ENCODE measurements at regions of chr15 and their contacts with region 1.

Region 1: GRCh38 chr15:39968273-39969001 is 34.5 kb downstream of the EIF2AK4 start:
- DNase-seq: no peak

Region 2: DNA sequence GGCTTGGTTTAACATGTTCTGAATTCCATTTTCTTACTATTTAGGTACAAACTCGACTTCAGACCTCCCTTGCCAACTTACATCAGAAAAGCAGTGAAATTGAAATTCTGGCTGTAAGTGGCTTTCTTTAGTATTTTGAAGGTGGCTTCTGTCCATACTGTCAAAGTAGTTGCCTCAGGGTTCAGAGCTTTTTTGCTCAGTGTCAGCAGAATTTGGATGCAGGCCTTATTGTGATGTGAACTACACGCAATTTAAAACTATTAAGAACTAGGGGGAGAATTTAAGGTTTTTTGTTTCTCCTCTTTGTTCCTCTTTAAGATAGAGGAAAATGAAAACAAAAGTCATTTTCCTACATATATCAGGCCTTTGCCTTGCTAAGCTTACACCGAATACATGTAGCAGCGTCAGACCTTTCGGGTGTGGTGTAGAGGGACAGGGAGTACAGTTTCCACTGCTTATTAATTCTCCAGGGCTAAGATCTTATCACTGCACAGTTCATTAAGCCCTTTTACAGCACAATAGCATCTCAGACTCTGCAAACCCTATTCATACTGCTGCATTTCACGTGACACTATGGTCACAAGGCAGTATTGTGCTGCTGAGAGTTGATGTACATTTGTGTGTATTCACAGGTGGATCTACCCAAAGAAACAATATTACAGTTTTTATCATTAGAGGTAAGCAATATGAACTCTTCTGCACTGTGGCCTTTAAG is 63.8 kb after region 1 on chr15:
- CTCF ChIA-PET with region 1: interaction called, 10 read pairs
- POLR2A ChIA-PET with region 1: no interaction called
- DNase-seq: no peak

Measured in HEK293T (cell line).